Left ventricle myocardium inferior (tissue), 1 donor: ENCODE measurements at regions of chr11 and their contacts with region 1.

Region 1: GRCh38 chr11:111283945-111284481 is 14.3 kb upstream of the POU2AF3 start:
- DNase-seq: peak; percentile 18
- H3K4me3 ChIP-seq: no peak overlapping the region
- H3K27ac ChIP-seq: no peak overlapping the region
- H3K4me1 ChIP-seq: peaks cover 6% of the 10 kb centered on the region
- H3K27me3 ChIP-seq: no peaks in the 10 kb centered on the region
- CTCF ChIP-seq: no peak

Region 2: GRCh38 chr11:111429066-111429506 is 145.1 kb after region 1 on chr11:
- intact Hi-C with region 1: loop called (anchors 5 kb)
- DNase-seq: peak; percentile 26
- H3K4me3 ChIP-seq: no peak overlapping the region
- H3K27ac ChIP-seq: no peak overlapping the region
- H3K4me1 ChIP-seq: no peaks in the 10 kb centered on the region
- H3K27me3 ChIP-seq: peaks cover 36% of the 10 kb centered on the region
- CTCF ChIP-seq: peak; percentile 61

Region 3: GRCh38 chr11:111446404-111447111 is 162.5 kb after region 1 on chr11:
- intact Hi-C with region 1: loop called (anchors 2 kb)
- DNase-seq: peak; percentile 59
- H3K4me3 ChIP-seq: no peak overlapping the region
- H3K27ac ChIP-seq: peak overlapping the region; percentile 57
- H3K4me1 ChIP-seq: peaks cover 15% of the 10 kb centered on the region
- H3K27me3 ChIP-seq: peaks cover 15% of the 10 kb centered on the region
- CTCF ChIP-seq: peak; percentile 84